ENCODE measurements at regions of chr21 and their contacts with region 1.

Region 1: DNA sequence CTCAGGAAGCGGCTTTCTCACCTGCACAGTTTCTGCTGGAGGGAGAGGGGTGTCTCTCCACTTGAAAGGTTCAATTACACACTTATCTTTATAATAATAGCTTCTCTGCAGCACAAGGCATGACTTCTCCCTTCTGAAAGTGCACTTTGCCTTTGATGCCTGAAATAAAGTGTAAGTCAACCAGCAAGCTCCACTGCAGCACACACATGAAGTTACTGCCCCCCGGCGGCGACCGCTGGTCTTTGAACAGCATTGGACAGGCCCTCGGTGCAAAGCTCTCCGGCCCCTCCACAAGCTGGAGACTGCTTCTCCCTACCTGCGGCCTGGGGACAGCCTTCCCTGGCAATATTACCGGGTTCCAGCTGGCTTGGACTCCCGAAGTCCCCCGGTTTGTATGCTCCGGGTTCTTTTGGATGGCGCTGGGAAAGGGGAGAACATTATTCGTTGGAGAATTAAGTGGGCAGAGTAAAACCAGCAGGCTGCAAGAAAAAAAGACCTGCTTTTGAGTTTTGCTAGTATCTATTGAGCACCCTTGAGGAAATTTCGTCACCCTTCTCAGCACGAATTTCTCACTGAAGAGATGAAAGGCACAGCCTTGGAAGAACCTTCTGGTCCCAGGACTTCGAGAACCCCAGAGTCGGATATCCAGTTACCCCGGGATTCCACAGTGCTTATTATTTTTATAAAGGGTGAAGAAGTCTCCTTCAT is 11.8 kb downstream of the RCAN1 start:
- DNase-seq: peak; percentile 83
- ATAC-seq: peak; percentile 88
- H3K4me3 Mint-ChIP-seq: no peak overlapping the region
- H3K27ac Mint-ChIP-seq: no peak overlapping the region
- H3K4me1 Mint-ChIP-seq: no peaks in the 10 kb centered on the region
- H3K27me3 Mint-ChIP-seq: no peaks in the 10 kb centered on the region
- CTCF ChIP-seq: peak; percentile 81

Region 2: DNA sequence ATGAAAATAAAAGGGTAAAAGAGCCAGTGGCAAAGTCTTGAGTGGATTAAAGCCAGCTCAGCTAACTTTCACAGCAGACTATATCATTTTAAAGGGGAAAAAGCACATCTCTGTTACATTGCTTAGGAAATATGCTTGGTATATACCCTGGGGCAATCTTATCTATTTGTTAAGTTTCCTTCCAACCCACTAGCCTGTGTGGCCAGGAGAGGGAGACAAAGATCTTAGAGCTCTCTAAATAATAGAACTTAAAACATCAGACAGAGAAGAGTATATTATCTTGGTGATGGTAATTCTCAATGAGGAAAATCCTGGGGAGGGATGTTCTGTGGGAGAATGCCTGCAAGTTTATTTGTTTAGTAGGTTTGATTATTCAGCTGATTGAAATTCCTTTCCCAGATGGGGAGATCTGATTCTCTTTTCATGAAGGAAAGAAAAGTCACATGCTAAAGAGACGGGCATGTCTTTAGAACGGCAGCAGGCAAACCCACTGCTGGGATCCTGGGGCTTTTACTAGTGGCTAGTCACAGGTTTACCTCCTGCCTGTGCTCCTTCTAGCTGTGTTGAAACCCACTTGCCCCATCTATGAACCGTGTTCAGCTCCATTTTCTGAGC is 235.7 kb before region 1 on chr21:
- CTCF ChIA-PET with region 1: interaction called, 14 read pairs
- POLR2A ChIA-PET with region 1: no interaction called
- intact Hi-C with region 1: no loop called
- DNase-seq: peak; percentile 71
- ATAC-seq: peak; percentile 60
- H3K4me3 Mint-ChIP-seq: no peak overlapping the region
- H3K27ac Mint-ChIP-seq: no peak overlapping the region
- H3K4me1 Mint-ChIP-seq: peaks cover 2% of the 10 kb centered on the region
- H3K27me3 Mint-ChIP-seq: peaks cover 5% of the 10 kb centered on the region
- CTCF ChIP-seq: peak; percentile 66

Region 3: GRCh38 chr21:34510148-34511142 is 92.7 kb before region 1 on chr21:
- CTCF ChIA-PET with region 1: interaction called, 26 read pairs
- POLR2A ChIA-PET with region 1: no interaction called
- intact Hi-C with region 1: no loop called
- DNase-seq: peak; percentile 82
- ATAC-seq: peak; percentile 92
- H3K4me3 Mint-ChIP-seq: no peak overlapping the region
- H3K27ac Mint-ChIP-seq: no peak overlapping the region
- H3K4me1 Mint-ChIP-seq: no peaks in the 10 kb centered on the region
- H3K27me3 Mint-ChIP-seq: peaks cover 2% of the 10 kb centered on the region
- CTCF ChIP-seq: peak; percentile 59

Region 4: GRCh38 chr21:34592120-34592955 is 10.8 kb before region 1 on chr21:
- CTCF ChIA-PET with region 1: interaction called, 15 read pairs
- POLR2A ChIA-PET with region 1: interaction called, 6 read pairs
- intact Hi-C with region 1: no loop called
- DNase-seq: no peak
- ATAC-seq: no peak
- H3K4me3 Mint-ChIP-seq: no peak overlapping the region
- H3K27ac Mint-ChIP-seq: no peak overlapping the region
- H3K4me1 Mint-ChIP-seq: peaks cover 7% of the 10 kb centered on the region
- H3K27me3 Mint-ChIP-seq: no peaks in the 10 kb centered on the region
- CTCF ChIP-seq: no peak

Region 5: GRCh38 chr21:34614633-34615486 is 11.7 kb after region 1 on chr21 and contains the start of gene RCAN1:
- CTCF ChIA-PET with region 1: interaction called, 37 read pairs
- POLR2A ChIA-PET with region 1: interaction called, 3 read pairs
- intact Hi-C with region 1: no loop called
- DNase-seq: peak; percentile 89
- ATAC-seq: peak; percentile 97
- H3K4me3 Mint-ChIP-seq: peak within 1 kb of the TSS; percentile 84
- H3K27ac Mint-ChIP-seq: peak within 1 kb of the TSS; percentile 85
- H3K4me1 Mint-ChIP-seq: peaks cover 17% of the 10 kb centered on the region
- H3K27me3 Mint-ChIP-seq: no peaks in the 10 kb centered on the region
- CTCF ChIP-seq: no peak
- total RNA-seq, gene RCAN1: 6.1 to 7.8 TPM

Region 6: GRCh38 chr21:34688145-34688544 is 85.0 kb after region 1 on chr21:
- CTCF ChIA-PET with region 1: no interaction called
- POLR2A ChIA-PET with region 1: no interaction called
- intact Hi-C with region 1: no loop called
- DNase-seq: no peak
- ATAC-seq: no peak
- H3K4me3 Mint-ChIP-seq: no peak overlapping the region
- H3K27ac Mint-ChIP-seq: no peak overlapping the region
- H3K4me1 Mint-ChIP-seq: peaks cover under 1% of the 10 kb centered on the region
- H3K27me3 Mint-ChIP-seq: peaks cover 7% of the 10 kb centered on the region
- CTCF ChIP-seq: no peak